CD8-positive, alpha-beta T cell (primary cell): ENCODE measurements at regions of chr3 and their contacts with region 1.

Region 1: GRCh38 chr3:141738022-141738890 is at the start of gene RNF7:
- DNase-seq: peak; percentile 95 to 99 (median 97)
- ATAC-seq: peak; percentile 94
- H3K4me3 ChIP-seq: peak within 1 kb of the TSS; percentile 82 to 95
- H3K4me3 Mint-ChIP-seq: peak within 1 kb of the TSS; percentile 97
- H3K27ac ChIP-seq: peak within 1 kb of the TSS; percentile 82 to 90
- H3K27ac Mint-ChIP-seq: peak within 1 kb of the TSS; percentile 98
- H3K4me1 ChIP-seq: peaks cover 31% of the 10 kb centered on the region
- H3K4me1 Mint-ChIP-seq: peaks cover 36% of the 10 kb centered on the region
- H3K27me3 ChIP-seq: no peaks in the 10 kb centered on the region
- H3K27me3 Mint-ChIP-seq: no peaks in the 10 kb centered on the region
- CTCF ChIP-seq: peak; percentile 70
- total RNA-seq, gene RNF7: 82.8 to 83.9 TPM

Region 2: DNA sequence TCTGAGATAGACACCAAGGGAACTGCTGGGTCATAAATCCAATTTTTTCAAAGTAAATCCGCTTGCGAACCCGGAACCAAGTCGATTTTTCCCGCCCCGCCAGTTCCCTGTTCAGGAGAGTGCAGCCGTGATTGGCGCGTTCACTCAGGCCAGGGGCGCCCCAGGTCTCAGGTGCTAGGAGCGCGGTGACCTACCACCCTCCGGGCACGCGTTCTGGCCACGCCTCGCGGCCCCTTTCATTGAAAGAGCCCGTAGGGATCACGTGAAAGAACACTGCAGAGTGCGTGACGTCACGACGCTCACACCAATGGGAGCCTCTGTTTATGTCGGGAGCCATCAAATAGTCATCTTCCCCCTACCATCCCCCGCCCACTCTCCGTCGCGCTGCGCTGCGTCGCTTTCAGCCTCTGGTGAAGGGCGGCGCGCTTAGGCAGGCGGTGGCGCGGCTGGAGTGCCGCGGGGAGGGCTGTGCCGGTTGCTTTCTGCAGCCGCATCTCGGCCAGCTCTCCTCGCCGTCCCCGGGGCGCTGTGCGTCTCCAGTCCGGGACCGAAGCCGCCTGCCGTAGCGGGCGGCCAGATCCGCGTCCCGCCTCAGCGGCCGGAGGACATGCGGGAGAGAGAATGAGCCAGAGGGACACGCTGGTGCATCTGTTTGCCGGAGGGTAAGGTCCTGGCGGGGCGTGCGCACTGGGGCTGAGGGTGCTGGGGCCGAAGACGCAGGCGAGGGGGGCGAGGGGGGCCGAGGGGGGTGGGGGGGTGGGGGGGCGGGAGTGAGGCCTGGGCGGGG is 796.6 kb before region 1 on chr3 and contains the start of gene SLC25A36:
- CTCF ChIA-PET with region 1: no interaction called
- POLR2A ChIA-PET with region 1: no interaction called
- intact Hi-C with region 1: loop called (anchors 2 to 10 kb)
- DNase-seq: peak; percentile 90 to 100 (median 96)
- ATAC-seq: peak; percentile 96
- H3K4me3 ChIP-seq: peak within 1 kb of the TSS; percentile 71 to 78
- H3K4me3 Mint-ChIP-seq: peak within 1 kb of the TSS; percentile 90
- H3K27ac ChIP-seq: peak within 1 kb of the TSS; percentile 85 to 88
- H3K27ac Mint-ChIP-seq: peak within 1 kb of the TSS; percentile 99
- H3K4me1 ChIP-seq: peaks cover 14% of the 10 kb centered on the region
- H3K4me1 Mint-ChIP-seq: peaks cover 36% of the 10 kb centered on the region
- H3K27me3 ChIP-seq: no peaks in the 10 kb centered on the region
- H3K27me3 Mint-ChIP-seq: no peaks in the 10 kb centered on the region
- CTCF ChIP-seq: no peak
- total RNA-seq, gene SLC25A36: 156 to 165 TPM

Region 3: GRCh38 chr3:141487521-141488252 is 250.6 kb before region 1 on chr3:
- CTCF ChIA-PET with region 1: no interaction called
- POLR2A ChIA-PET with region 1: interaction called, 3 read pairs
- intact Hi-C with region 1: loop called in 1 of 2 experiments (anchors 1 kb)
- DNase-seq: peak; percentile 67 to 94 (median 87)
- ATAC-seq: peak; percentile 60
- H3K4me3 ChIP-seq: peak overlapping the region; percentile 59 to 68
- H3K4me3 Mint-ChIP-seq: peak overlapping the region; percentile 93
- H3K27ac ChIP-seq: peak overlapping the region; percentile 73 to 85
- H3K27ac Mint-ChIP-seq: peak overlapping the region; percentile 96
- H3K4me1 ChIP-seq: peaks cover 65% of the 10 kb centered on the region
- H3K4me1 Mint-ChIP-seq: peaks cover 76% of the 10 kb centered on the region
- H3K27me3 ChIP-seq: no peaks in the 10 kb centered on the region
- H3K27me3 Mint-ChIP-seq: no peaks in the 10 kb centered on the region
- CTCF ChIP-seq: no peak

Region 4: GRCh38 chr3:141845407-141846049 is 107.3 kb after region 1 on chr3:
- CTCF ChIA-PET with region 1: interaction called, 23 read pairs
- POLR2A ChIA-PET with region 1: interaction called, 7 read pairs
- intact Hi-C with region 1: loop called (anchors 1 kb)
- DNase-seq: peak in 8 of 9 experiments; percentile 12 to 68 (median 50)
- ATAC-seq: peak; percentile 81
- H3K4me3 ChIP-seq: no peak overlapping the region
- H3K4me3 Mint-ChIP-seq: no peak overlapping the region
- H3K27ac ChIP-seq: no peak overlapping the region
- H3K27ac Mint-ChIP-seq: peak overlapping the region; percentile 22
- H3K4me1 ChIP-seq: peaks cover 6% of the 10 kb centered on the region
- H3K4me1 Mint-ChIP-seq: peaks cover 7% of the 10 kb centered on the region
- H3K27me3 ChIP-seq: peaks cover 0 to 3% of the 10 kb centered on the region in 2 experiments
- H3K27me3 Mint-ChIP-seq: peaks cover 3% of the 10 kb centered on the region
- CTCF ChIP-seq: no peak

Region 5: DNA sequence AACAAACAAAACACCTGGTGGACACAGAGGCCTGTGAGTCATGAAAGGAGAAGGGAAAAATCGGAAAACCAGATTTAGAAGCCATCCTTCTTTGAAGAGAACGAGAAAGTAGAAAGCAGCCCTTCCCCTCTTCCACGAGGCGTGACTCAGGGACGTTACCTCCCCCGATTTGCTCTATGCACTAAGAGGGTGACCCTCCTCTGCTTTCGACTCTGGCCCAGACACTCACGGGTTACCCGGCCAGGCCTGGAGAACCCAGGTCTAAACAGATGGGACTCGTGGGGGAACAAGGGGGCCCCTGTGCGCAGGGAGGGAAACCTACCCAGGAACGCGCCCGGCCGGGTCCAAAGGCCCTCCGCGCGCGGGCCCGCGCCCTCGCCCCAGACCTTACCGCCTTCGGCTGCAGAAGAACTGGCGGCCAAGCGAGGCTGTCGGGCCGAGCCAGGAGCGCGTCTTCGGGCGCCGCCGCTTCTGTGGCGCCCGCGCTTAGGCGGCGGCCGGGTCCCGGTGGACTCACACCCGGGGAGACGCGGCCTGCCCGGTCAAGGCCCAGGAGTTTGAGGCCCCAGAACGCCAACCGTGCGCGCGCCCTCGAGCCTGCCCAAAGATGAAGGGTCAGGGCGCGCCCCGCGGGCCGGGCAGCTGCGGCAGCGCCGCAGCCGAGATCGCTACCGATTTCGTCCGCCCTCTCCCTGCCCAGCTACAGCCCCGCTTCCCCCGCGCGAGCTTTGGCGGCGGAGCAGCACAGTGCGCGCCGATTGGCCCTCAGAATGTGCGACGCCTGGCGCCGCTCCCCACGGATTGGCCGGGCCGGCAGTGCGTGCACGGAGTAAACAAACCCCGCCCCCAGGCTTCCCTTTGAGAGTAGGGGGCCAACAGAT is 410.8 kb after region 1 on chr3 and contains the start of gene TFDP2:
- CTCF ChIA-PET with region 1: no interaction called
- POLR2A ChIA-PET with region 1: no interaction called
- intact Hi-C with region 1: loop called in 1 of 2 experiments (anchors 10 kb)
- DNase-seq: peak; percentile 68 to 92 (median 85)
- ATAC-seq: peak; percentile 98
- H3K4me3 ChIP-seq: peak within 1 kb of the TSS; percentile 69 to 74
- H3K4me3 Mint-ChIP-seq: peak within 1 kb of the TSS; percentile 89
- H3K27ac ChIP-seq: peak within 1 kb of the TSS; percentile 67 to 73
- H3K27ac Mint-ChIP-seq: peak within 1 kb of the TSS; percentile 85
- H3K4me1 ChIP-seq: peaks cover 17% of the 10 kb centered on the region
- H3K4me1 Mint-ChIP-seq: peaks cover 32% of the 10 kb centered on the region
- H3K27me3 ChIP-seq: no peaks in the 10 kb centered on the region
- H3K27me3 Mint-ChIP-seq: no peaks in the 10 kb centered on the region
- CTCF ChIP-seq: no peak
- total RNA-seq, gene TFDP2: 37.0 to 43.0 TPM

Region 6: DNA sequence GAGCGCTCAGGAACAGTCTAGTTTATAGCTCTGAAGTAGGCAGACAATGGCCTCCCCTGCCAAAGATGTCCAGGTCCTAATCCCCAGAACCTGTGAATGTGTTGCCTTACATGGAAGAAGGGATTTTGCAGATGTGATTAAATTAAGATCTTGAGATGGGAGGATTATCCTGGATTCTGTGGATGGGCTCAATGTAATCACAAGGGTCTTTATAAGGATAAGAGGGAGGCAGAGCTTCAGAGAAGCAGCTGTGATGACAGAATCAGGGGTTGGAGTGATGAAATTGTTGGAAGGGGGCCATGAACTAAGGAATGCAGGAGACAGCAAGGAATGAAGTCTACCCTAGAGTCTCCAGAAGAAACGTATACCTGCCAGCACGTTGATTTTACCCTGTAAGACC is 501.2 kb after region 1 on chr3:
- CTCF ChIA-PET with region 1: no interaction called
- POLR2A ChIA-PET with region 1: no interaction called
- intact Hi-C with region 1: no loop called
- DNase-seq: no peak
- ATAC-seq: no peak
- H3K4me3 ChIP-seq: no peak overlapping the region
- H3K4me3 Mint-ChIP-seq: no peak overlapping the region
- H3K27ac ChIP-seq: no peak overlapping the region
- H3K27ac Mint-ChIP-seq: no peak overlapping the region
- H3K4me1 ChIP-seq: no peaks in the 10 kb centered on the region
- H3K4me1 Mint-ChIP-seq: no peaks in the 10 kb centered on the region
- H3K27me3 ChIP-seq: no peaks in the 10 kb centered on the region
- H3K27me3 Mint-ChIP-seq: peaks cover 15% of the 10 kb centered on the region
- CTCF ChIP-seq: no peak

Region 7: DNA sequence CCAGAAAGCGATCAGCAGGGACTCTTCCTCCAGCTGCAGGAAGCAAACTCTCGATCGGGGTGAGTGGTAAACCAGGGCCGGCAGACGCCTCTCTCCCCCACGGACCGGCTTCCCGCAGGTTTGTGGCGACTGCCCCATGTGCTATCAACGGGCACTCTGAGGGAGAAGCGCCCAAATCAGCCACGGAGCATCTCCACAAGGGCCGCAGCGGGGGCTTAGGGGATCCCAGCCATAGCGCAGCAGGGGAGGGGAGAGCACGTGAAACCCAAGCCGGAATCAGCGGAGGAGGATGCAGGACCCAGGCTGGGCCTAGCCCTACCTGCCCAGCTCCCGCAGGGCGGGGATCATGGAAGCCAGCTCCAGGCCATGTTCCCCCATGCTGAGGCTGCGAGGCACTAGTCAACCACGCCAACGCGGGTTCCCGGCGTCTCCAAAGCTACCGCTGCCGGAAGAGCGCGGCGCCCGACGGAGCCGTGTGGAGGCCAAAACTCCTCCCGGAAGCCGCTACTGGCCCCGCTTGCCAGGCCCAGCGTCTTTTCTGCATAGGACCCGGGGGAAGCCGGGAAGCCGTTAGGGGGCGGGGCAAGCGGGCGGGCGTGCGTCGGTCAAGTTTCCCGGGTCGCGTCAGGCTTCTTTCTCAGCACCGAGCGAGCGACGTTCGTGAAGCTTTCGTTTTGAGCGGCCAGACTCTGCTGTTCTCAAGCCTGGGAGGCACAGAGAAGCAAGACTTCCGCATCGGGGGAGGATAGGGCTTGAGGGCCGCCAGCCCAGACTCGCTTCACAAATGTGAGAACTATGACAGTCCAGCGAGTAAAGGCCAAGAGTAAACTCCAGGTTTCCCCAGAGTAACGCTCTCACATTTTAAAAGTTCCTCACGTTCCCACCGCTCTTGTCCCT is 840.3 kb after region 1 on chr3 and contains the start of gene ATR:
- CTCF ChIA-PET with region 1: no interaction called
- POLR2A ChIA-PET with region 1: no interaction called
- intact Hi-C with region 1: loop called in 1 of 2 experiments (anchors 10 kb)
- DNase-seq: peak; percentile 91 to 98 (median 97)
- ATAC-seq: peak; percentile 91
- H3K4me3 ChIP-seq: peak within 1 kb of the TSS; percentile 92 to 99
- H3K4me3 Mint-ChIP-seq: peak within 1 kb of the TSS; percentile 96
- H3K27ac ChIP-seq: peak within 1 kb of the TSS; percentile 97 to 99
- H3K27ac Mint-ChIP-seq: peak within 1 kb of the TSS; percentile 98
- H3K4me1 ChIP-seq: peaks cover 45% of the 10 kb centered on the region
- H3K4me1 Mint-ChIP-seq: peaks cover 52% of the 10 kb centered on the region
- H3K27me3 ChIP-seq: no peaks in the 10 kb centered on the region
- H3K27me3 Mint-ChIP-seq: no peaks in the 10 kb centered on the region
- CTCF ChIP-seq: no peak
- total RNA-seq, gene ATR: 26.7 to 28.0 TPM